Activated CD4-positive, alpha-beta T cell treated with anti-CD3 and anti-CD28 coated beads, Interleukin-2, amount 10 ng/mL, durations not matched to agents 24 days and 14 days (primary cell): ENCODE measurements at regions of chr15 and their contacts with region 1.

Region 1: GRCh38 chr15:67101911-67102598 is 36.7 kb downstream of the SMAD3 start:
- DNase-seq: peak; percentile 89
- H3K4me3 Mint-ChIP-seq: no peak overlapping the region
- H3K27ac Mint-ChIP-seq: no peak overlapping the region
- H3K4me1 Mint-ChIP-seq: peaks cover 62% of the 10 kb centered on the region
- H3K27me3 Mint-ChIP-seq: no peaks in the 10 kb centered on the region

Region 2: GRCh38 chr15:66560851-66561525 is 541.1 kb before region 1 on chr15:
- intact Hi-C with region 1: no loop called
- DNase-seq: no peak
- H3K4me3 Mint-ChIP-seq: no peak overlapping the region
- H3K27ac Mint-ChIP-seq: no peak overlapping the region
- H3K4me1 Mint-ChIP-seq: no peaks in the 10 kb centered on the region
- H3K27me3 Mint-ChIP-seq: no peaks in the 10 kb centered on the region

Region 3: GRCh38 chr15:67091071-67091979 is 10.7 kb before region 1 on chr15:
- intact Hi-C with region 1: loop called (anchors 1 kb)
- DNase-seq: peak; percentile 95
- H3K4me3 Mint-ChIP-seq: peak overlapping the region; percentile 81
- H3K27ac Mint-ChIP-seq: peak overlapping the region; percentile 95
- H3K4me1 Mint-ChIP-seq: peaks cover 92% of the 10 kb centered on the region
- H3K27me3 Mint-ChIP-seq: no peaks in the 10 kb centered on the region

Region 4: DNA sequence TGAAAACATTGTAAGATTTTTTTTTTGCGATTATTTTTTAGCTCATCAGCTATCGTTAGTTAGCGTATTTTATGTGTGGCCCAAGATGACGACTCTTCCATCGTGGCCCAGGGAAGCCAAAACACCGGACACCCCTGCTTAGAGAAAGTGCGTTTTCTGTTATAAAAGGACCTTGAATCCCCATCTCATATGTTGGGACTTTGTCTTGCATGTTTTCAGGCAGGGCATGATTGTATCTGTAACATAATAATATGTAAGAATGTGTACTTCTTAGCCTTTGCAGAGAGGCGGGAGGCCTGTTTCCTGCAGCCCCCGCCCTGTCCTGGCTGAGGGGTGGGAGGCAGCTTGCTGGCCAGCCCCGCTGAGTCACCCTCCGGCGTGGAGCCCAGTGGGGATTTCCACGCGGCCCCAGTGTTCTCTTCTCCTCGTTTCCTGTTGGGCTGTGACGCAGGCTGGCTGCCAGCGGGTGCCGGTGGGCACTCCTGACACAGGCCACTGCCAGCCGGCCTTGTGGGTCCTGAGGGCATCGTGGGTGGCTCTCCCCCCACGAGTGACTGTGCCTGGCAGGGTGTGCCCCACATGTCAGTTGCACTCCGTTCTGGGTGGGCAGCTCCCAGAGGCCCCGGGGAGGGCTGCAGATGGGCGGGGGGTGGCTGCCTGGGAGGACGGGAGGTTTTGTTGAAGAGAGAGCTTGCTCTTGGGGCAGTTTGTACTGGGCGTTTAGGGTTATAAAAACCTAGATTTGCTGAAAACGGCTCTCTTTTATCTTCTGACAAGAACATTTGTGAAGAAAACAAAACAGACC is 19.0 kb after region 1 on chr15:
- intact Hi-C with region 1: loop called (anchors 1 kb)
- DNase-seq: peak; percentile 96
- H3K4me3 Mint-ChIP-seq: peak overlapping the region; percentile 87
- H3K27ac Mint-ChIP-seq: peak overlapping the region; percentile 99
- H3K4me1 Mint-ChIP-seq: peaks cover 86% of the 10 kb centered on the region
- H3K27me3 Mint-ChIP-seq: no peaks in the 10 kb centered on the region

Region 5: DNA sequence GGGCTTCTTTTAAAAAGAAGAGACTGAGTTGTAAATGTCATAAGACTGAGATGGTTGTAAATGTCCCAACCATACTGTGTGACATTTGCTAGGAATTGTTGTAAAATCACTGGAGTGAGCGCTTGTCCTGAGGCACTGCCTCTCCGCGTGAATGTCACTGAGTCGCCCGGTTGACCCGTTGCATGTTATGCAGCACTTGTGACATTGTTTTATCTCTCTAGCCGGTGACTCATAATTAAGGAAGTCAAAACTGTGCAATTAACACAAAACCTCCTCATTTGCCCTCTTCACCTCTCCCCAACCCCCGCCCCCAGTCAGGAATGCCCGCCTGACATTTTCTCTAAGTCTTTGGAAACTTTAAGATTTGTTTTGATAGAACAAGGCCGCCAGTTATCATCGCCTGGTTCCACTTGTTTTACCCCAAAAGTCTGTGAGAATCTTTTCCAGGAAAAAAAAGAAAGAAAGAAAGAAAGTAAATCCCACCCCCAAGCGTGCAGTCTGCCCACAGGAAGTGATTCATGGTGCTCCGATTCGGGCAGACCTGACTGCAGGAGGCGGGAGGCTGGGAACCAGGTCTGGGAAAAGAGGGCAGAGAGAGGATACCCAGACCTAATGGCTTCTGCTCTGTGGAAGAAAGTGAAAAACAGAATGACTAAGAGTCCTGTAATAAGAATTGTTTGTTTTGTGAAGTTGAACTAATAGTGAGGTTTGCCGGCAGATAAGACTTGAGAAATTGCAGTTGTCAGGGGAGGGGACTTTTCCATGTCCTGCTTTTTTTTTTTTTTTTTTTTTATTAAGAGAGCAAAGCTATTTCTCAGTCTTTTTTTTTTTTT is 48.2 kb after region 1 on chr15:
- intact Hi-C with region 1: loop called (anchors 1 kb)
- DNase-seq: peak; percentile 80
- H3K4me3 Mint-ChIP-seq: peak overlapping the region; percentile 73
- H3K27ac Mint-ChIP-seq: peak overlapping the region; percentile 86
- H3K4me1 Mint-ChIP-seq: peaks cover 67% of the 10 kb centered on the region
- H3K27me3 Mint-ChIP-seq: no peaks in the 10 kb centered on the region

Region 6: GRCh38 chr15:67240235-67241131 is 138.4 kb after region 1 on chr15:
- intact Hi-C with region 1: loop called (anchors 1 kb)
- DNase-seq: peak; percentile 72
- H3K4me3 Mint-ChIP-seq: peak overlapping the region; percentile 80
- H3K27ac Mint-ChIP-seq: peak overlapping the region; percentile 91
- H3K4me1 Mint-ChIP-seq: peaks cover 44% of the 10 kb centered on the region
- H3K27me3 Mint-ChIP-seq: no peaks in the 10 kb centered on the region